IMR-90 (cell line): ENCODE measurements at regions of chr2 and their contacts with region 1.

Region 1: GRCh38 chr2:48946449-48947048 is 191.0 kb upstream of the LHCGR start:
- DNase-seq: peak; percentile 43
- ATAC-seq: peak; percentile 86
- H3K4me3 ChIP-seq: no peak overlapping the region
- H3K27ac ChIP-seq: no peak overlapping the region
- H3K4me1 ChIP-seq: no peaks in the 10 kb centered on the region
- H3K27me3 ChIP-seq: no peaks in the 10 kb centered on the region; the same call in 1 of the 2 replicates
- CTCF ChIP-seq: peak; percentile 77
- POLR2A ChIP-seq: no peak
- RAD21 ChIP-seq: peak; percentile 83

Region 2: DNA sequence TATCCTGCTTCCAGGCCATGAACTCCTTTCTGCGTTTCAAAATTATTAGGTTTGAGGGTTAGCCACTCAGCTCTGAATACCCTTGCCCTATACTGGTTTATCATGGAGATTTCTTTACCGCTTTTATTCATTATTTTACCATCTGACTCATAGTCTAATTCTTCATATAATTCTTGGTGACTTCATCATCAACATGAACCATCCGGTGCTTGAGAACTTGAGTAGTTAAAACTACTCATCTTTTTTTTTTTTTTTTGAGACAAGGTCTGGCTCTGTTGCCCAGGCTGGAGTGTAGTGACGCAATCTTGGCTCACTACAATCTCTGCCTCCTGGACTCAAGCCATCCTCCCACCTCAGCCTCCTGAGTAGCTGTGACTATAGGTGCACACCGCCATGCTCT is 96.8 kb before region 1 on chr2:
- CTCF ChIA-PET with region 1: interaction called, 3 read pairs
- POLR2A ChIA-PET with region 1: no interaction called
- dilution Hi-C with region 1: no loop called
- in situ Hi-C with region 1: no loop called
- intact Hi-C with region 1: loop called (anchors 2 kb)
- DNase-seq: peak; percentile 92
- ATAC-seq: peak; percentile 56
- H3K4me3 ChIP-seq: no peak overlapping the region
- H3K27ac ChIP-seq: peak overlapping the region; percentile 88
- H3K4me1 ChIP-seq: peaks cover 34% of the 10 kb centered on the region
- H3K27me3 ChIP-seq: no peaks in the 10 kb centered on the region
- CTCF ChIP-seq: no peak
- POLR2A ChIP-seq: no peak
- RAD21 ChIP-seq: no peak

Region 3: GRCh38 chr2:49332415-49332814 is 385.9 kb after region 1 on chr2:
- CTCF ChIA-PET with region 1: no interaction called
- POLR2A ChIA-PET with region 1: no interaction called
- dilution Hi-C with region 1: no loop called
- in situ Hi-C with region 1: no loop called
- intact Hi-C with region 1: loop called (anchors 5 kb)
- DNase-seq: no peak
- ATAC-seq: no peak
- H3K4me3 ChIP-seq: no peak overlapping the region
- H3K27ac ChIP-seq: no peak overlapping the region
- H3K4me1 ChIP-seq: no peaks in the 10 kb centered on the region
- H3K27me3 ChIP-seq: no peaks in the 10 kb centered on the region
- CTCF ChIP-seq: peak; percentile 20; the same call in 1 of the 2 replicates
- POLR2A ChIP-seq: no peak
- RAD21 ChIP-seq: peak; percentile 12; the same call in 1 of the 2 replicates

Region 4: GRCh38 chr2:50401772-50402653 is 1455.5 kb after region 1 on chr2:
- CTCF ChIA-PET with region 1: no interaction called
- POLR2A ChIA-PET with region 1: no interaction called
- dilution Hi-C with region 1: no loop called
- in situ Hi-C with region 1: no loop called
- intact Hi-C with region 1: loop called (anchors 5 kb)
- DNase-seq: peak; percentile 52
- ATAC-seq: peak; percentile 72
- H3K4me3 ChIP-seq: no peak overlapping the region
- H3K27ac ChIP-seq: no peak overlapping the region
- H3K4me1 ChIP-seq: no peaks in the 10 kb centered on the region
- H3K27me3 ChIP-seq: no peaks in the 10 kb centered on the region
- CTCF ChIP-seq: peak; percentile 81
- POLR2A ChIP-seq: no peak
- RAD21 ChIP-seq: peak; percentile 75

Region 5: DNA sequence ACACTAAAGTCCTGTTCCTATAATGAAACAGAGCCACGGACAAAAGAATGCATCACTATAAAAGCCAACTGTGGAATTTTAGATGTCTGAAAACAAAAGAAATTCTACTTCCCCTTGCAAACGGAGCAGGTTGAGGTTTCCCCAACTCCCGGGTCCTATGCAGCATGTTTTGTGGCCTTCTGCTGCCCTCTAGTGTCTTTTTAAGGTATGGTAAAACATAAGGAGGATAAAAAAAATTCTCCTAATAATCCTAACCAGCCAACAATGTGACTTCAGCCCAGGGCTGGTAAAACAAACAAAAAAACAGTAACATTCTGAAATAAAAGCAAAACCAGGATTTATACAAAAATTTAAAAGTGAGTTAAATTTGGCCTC is 1545.9 kb after region 1 on chr2:
- CTCF ChIA-PET with region 1: no interaction called
- POLR2A ChIA-PET with region 1: no interaction called
- dilution Hi-C with region 1: no loop called
- in situ Hi-C with region 1: no loop called
- intact Hi-C with region 1: loop called (anchors 1 kb)
- DNase-seq: peak; percentile 65
- ATAC-seq: peak; percentile 83
- H3K4me3 ChIP-seq: no peak overlapping the region
- H3K27ac ChIP-seq: no peak overlapping the region
- H3K4me1 ChIP-seq: no peaks in the 10 kb centered on the region
- H3K27me3 ChIP-seq: no peaks in the 10 kb centered on the region; the same call in 1 of the 2 replicates
- CTCF ChIP-seq: peak; percentile 81
- POLR2A ChIP-seq: no peak
- RAD21 ChIP-seq: peak; percentile 67